ENCODE measurements at regions of chr18 and their contacts with region 1.

Region 1: DNA sequence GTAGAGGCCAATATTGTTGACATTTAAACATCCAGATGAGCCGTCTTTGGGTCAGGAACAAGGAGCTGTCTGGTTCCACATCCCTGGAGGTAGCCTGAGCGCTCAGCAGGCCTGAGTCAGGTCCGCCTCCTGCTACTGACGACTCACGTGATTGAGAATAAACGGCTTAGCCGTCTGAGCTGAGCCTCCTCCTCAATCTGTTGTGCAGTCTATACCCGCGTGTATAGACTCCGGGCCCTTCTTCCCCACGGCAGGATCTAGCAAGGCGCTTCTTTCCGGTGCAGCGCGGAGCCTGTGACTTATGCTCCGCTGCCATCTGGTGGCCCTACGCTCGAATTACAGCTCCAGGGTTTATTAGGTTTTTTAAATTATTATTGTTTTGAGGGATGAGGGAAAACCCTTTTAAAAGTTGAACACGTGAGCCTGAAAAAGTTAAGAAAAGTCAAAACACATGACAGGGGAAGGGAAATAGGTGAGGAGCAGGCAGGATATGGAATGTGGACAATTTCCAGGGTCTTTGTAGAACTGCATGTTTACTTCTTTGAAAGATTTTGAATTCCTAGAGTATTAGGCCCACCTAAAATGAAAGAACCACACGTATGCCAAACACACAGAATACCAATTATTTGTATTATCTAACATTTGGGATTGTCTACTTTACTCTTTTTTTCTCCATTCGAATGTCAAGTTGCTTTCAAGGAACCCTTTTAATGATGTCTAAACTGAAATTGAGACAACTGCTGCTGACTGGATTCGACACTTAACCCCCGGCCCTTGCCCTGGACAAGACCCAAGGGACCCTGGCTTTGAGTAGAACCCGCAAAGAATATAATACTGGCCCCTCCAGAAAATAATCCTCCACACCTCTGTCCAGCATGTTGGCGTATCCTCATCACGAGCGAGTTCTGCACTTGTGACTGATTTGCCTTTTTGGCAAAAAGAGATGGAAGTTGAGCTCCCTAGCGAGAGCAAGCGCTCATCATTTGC is 112.4 kb upstream of the ZNF236 start:
- DNase-seq: peak; percentile 61 to 87 (median 74)

Region 2: DNA sequence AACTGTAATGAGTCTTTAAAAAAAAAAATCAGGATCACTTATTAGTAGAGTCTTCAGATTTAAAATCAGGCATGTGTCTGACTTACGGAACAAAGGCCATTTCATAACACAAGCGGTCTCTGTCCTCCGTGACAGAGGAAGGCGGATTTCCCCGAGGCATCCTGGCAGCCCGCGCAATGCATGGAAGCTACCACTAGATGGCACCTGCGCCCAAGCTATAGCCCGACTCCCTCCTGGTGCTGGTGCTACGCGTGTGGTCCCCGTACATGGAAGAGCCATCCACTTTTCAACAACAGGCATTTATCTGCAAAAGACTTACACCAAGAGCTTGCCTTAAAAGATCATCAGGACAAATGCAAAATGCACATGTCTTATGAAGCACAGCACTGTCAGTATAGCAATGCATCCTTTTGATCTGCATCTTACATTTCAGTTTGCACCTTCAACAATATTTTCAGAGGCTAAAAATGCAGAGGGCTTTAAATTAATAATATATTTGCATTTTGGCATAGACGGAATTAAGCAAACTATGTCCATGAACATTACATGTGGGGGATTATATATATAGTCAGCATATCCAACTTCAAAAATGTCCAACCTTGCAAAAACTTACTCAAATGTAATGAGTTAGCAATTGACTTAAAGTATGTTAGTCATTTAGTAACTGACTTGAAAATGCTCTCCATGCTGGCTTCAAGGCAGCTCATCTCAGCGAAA is 310.9 kb before region 1 on chr18:
- intact Hi-C with region 1: loop called (anchors 5 kb)
- DNase-seq: peak; percentile 70 to 96 (median 92)

Region 3: DNA sequence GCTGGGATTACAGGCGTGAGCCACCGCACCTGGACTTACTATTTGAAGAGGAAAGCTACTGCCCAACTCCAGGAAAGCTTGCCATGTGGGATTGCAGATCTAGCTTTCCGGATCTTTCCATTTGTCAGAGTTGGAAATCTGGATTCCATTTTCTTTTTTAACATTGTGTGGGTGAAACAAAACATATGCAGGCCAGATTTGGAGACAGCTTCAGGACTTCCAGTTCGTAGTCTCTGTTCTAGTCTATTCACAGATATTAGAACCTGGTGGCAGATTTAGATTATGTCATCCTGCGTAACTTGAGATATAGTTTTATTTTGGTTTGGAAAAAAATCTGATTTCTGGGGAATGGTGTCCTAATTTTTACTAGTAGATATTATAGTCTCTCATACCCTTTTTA is 182.9 kb after region 1 on chr18:
- intact Hi-C with region 1: no loop called
- DNase-seq: no peak

Measured in head of caudate nucleus (tissue), 42 donors.